ENCODE measurements at regions of chr7 and their contacts with region 1.

Region 1: DNA sequence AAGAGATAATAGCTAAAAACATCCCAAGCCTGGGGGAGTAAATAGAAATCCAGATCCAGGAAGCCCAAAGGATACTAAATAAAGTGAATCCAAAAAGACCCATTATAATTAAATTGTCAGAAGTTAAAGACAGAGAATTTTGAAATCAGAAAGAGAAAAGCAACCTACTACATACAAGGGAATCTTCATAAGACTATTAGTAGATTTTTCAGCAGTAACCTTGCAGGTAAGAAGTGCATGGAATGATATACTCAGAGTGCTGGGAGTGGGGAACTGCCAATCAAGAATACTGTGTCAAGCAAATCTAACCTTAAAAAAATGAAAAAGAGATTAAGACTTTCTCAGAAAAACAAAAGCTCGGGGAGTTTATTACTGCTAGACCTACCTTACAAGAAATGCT is 13.2 kb upstream of the GIMAP1 start:
- DNase-seq: no peak
- ATAC-seq: no peak
- H3K4me3 ChIP-seq: no peak overlapping the region
- H3K4me3 Mint-ChIP-seq: no peak overlapping the region
- H3K27ac ChIP-seq: no peak overlapping the region
- H3K27ac Mint-ChIP-seq: no peak overlapping the region
- H3K4me1 ChIP-seq: no peaks in the 10 kb centered on the region
- H3K4me1 Mint-ChIP-seq: no peaks in the 10 kb centered on the region
- H3K27me3 ChIP-seq: no peaks in the 10 kb centered on the region
- H3K27me3 Mint-ChIP-seq: no peaks in the 10 kb centered on the region
- CTCF ChIP-seq: no peak

Region 2: DNA sequence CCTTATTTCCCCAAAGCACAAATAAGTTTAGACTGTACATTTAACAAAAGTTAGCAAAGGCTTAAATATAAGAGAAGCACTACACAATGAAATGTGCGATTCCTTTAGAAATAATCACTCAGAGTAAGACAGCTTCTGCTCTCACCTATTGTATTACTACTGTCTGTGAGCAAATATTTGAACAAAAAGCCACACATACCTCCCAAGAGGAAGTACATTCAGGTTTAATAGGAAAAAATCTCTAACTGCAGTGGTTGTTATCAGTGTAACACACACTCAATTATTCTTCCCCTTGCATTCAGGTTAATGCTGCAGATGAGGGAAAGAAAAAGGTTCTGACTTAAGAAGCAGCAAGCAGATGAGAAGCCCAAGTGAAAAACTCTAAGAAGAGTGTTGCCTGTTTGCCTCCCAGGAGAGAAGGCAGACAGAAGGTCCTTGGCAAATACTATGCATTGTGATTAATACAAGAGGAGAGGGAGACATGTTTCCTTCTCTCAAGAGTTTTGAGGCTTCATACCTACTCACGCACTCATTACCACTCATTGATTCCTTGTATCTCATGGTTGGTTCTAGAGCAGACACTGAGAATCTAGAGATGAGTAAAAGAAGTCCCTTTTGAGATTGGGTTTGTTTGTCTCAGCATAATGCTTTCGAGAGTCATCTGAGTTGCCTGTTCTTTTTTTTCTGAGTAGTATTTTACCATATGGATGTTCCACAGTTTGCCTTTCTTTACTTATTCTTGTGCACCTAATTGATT is 122.4 kb before region 1 on chr7:
- CTCF ChIA-PET with region 1: no interaction called
- POLR2A ChIA-PET with region 1: no interaction called
- intact Hi-C with region 1: loop called in 1 of 2 experiments (anchors 5 kb)
- DNase-seq: no peak
- ATAC-seq: no peak
- H3K4me3 ChIP-seq: no peak overlapping the region
- H3K4me3 Mint-ChIP-seq: no peak overlapping the region
- H3K27ac ChIP-seq: no peak overlapping the region
- H3K27ac Mint-ChIP-seq: peak overlapping the region; percentile 47
- H3K4me1 ChIP-seq: peaks cover 12% of the 10 kb centered on the region
- H3K4me1 Mint-ChIP-seq: peaks cover 41% of the 10 kb centered on the region
- H3K27me3 ChIP-seq: no peaks in the 10 kb centered on the region
- H3K27me3 Mint-ChIP-seq: no peaks in the 10 kb centered on the region
- CTCF ChIP-seq: no peak

Measured in CD4-positive, alpha-beta T cell (primary cell).